ENCODE measurements at regions of chr14 and their contacts with region 1.

Region 1: DNA sequence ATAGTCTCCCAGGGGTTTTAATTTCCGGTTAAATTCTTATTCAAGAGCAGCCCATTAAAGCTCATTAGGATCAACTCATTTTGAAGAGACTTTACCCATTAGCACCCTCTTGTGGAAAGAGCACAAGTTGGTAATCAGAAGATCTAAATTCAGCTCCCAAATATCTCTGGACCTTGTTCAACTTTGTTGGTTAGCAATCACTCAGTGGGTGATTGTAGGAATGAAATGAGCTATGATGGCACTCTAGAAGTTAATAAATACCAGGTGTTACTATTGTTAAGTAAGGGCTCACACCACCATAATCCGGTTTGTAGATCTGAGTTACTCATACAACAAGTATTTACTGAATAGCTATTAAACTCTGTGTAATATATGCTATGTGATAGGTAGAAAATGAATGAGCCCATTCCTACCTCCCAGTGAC is 42.9 kb downstream of the TRIP11 start:
- DNase-seq: no peak

Region 2: DNA sequence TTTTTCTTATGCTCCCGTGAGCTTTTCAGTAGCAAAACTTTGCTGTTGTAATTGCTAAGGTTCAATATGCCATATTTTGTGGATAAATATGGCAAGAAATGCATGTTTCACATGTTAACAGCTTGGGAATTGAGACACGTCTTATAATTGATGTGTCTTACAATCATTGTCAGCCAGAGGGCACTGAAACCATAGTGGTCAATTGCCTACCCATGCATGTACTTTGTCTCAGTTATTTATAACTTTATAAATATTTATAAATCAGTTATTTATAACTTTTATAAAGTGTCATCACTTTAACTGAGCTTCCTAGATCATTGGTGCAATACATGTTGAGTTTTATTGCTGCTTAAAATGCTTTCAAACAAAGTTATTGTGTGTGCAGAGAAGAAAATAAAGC is 347.0 kb before region 1 on chr14:
- intact Hi-C with region 1: loop called (anchors 5 kb)
- DNase-seq: peak in 1 of 10 donors; percentile 13

Measured in posterior cingulate gyrus (tissue), 11 donors.